CD14-positive monocyte (primary cell): ENCODE measurements at regions of chr6 and their contacts with region 1.

Region 1: GRCh38 chr6:75284632-75285286 is at the start of gene TMEM30A:
- DNase-seq: peak; percentile 99 to 100 (median 99)
- H3K4me3 ChIP-seq: peak within 1 kb of the TSS; percentile 91 to 100 (median 99)
- H3K4me3 Mint-ChIP-seq: no peak within 1 kb of the TSS
- H3K27ac ChIP-seq: peak within 1 kb of the TSS; percentile 93 to 98
- H3K27ac Mint-ChIP-seq: no peak within 1 kb of the TSS
- H3K4me1 ChIP-seq: peaks cover 18 to 54% of the 10 kb centered on the region in 2 donors
- H3K4me1 Mint-ChIP-seq: peaks cover 47% of the 10 kb centered on the region
- H3K27me3 ChIP-seq: no peaks in the 10 kb centered on the region
- H3K27me3 Mint-ChIP-seq: no peaks in the 10 kb centered on the region
- CTCF ChIP-seq: no peak
- polyA plus RNA-seq, gene TMEM30A: 12.2 to 101 (median 70.6) TPM

Region 2: GRCh38 chr6:75230484-75231325 is 54.1 kb before region 1 on chr6:
- intact Hi-C with region 1: no loop called
- DNase-seq: peak in 1 of 3 donors; percentile 7
- H3K4me3 ChIP-seq: no peak overlapping the region
- H3K4me3 Mint-ChIP-seq: no peak overlapping the region
- H3K27ac ChIP-seq: no peak overlapping the region
- H3K27ac Mint-ChIP-seq: no peak overlapping the region
- H3K4me1 ChIP-seq: no peaks in the 10 kb centered on the region
- H3K4me1 Mint-ChIP-seq: peaks cover 4% of the 10 kb centered on the region
- H3K27me3 ChIP-seq: no peaks in the 10 kb centered on the region
- H3K27me3 Mint-ChIP-seq: peaks cover 0 to 3% (median 2%) of the 10 kb centered on the region in 3 donors
- CTCF ChIP-seq: peak; percentile 62

Region 3: DNA sequence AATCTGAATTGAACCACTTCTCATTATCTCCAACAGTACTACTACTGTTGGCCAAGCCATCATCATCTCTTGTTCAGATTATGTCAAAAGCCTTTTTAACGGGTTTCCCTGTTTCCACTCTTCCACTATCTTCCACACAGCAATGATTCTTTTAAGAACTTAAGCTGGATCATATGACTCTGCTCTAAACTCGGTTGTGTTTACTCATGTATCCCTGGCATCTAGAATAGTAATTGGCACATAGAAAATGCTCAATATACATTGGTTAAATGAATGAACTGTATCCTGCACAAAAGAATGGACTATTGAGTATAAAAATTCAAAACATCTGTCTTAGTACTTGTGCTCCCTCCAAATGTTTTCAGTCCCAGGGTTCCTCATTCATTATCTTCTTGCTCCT is 38.4 kb before region 1 on chr6:
- intact Hi-C with region 1: loop called in 1 of 2 experiments (anchors 5 kb)
- DNase-seq: no peak
- H3K4me3 ChIP-seq: no peak overlapping the region
- H3K4me3 Mint-ChIP-seq: peak overlapping the region in 1 of 2 donors; percentile 18
- H3K27ac ChIP-seq: no peak overlapping the region
- H3K27ac Mint-ChIP-seq: no peak overlapping the region
- H3K4me1 ChIP-seq: peaks cover 7% of the 10 kb centered on the region in 2 donors
- H3K4me1 Mint-ChIP-seq: peaks cover 12% of the 10 kb centered on the region
- H3K27me3 ChIP-seq: peaks cover 8 to 22% of the 10 kb centered on the region in 2 donors
- H3K27me3 Mint-ChIP-seq: peaks cover 8 to 32% (median 23%) of the 10 kb centered on the region in 3 donors
- CTCF ChIP-seq: no peak

Region 4: DNA sequence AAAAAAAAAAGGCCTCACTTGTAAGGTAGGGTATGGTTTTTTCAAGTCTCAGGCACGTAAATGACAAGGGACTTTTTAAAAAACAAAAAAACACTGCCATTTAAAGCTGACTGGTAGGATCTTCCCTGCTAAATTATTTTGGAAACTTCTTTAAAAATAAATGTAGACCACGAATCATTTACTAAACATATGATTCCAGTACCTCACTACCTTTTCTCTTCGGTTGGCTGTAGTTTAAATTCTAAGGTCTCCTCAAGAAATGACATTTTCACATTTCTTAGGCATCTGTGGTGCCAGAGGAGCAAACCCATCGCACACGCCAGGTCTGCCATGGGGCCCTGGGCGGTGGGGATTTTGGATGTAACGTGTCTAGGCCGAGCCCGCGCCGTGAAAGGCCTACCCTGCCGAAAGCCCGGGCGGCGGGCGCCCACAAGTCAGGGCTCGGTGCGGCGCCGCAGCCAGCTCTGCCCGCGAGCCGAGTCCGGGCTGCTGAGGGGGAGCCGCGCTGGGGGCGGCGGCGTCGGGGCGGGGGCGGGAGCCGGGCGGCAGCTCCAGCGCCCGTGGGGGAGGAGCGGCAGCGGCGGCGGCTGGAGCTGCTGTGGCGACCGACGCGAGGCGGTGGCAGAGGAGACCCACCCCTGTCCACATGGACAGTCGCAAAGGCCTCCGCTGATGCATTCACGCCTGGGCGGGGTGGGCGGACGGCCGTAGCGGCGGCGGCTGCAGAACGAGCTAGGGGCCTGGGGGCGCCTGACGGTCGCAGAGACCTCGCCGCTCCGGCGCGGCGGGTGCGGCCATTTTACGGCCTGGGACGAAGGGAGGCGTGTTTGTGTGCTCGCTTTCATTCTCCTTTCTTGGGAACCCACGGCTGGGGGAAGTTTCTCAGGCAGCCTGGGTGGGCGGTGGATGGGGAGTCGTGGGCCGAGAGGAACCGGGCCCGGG is 316.8 kb after region 1 on chr6 and contains the start of gene SENP6:
- intact Hi-C with region 1: loop called (anchors 5 to 10 kb)
- DNase-seq: peak; percentile 60 to 70 (median 66)
- H3K4me3 ChIP-seq: peak within 1 kb of the TSS; percentile 56 to 97 (median 89)
- H3K4me3 Mint-ChIP-seq: peak within 1 kb of the TSS; percentile 97 to 98
- H3K27ac ChIP-seq: peak within 1 kb of the TSS; percentile 83 to 94
- H3K27ac Mint-ChIP-seq: peak within 1 kb of the TSS; percentile 94 to 99 (median 96)
- H3K4me1 ChIP-seq: peaks cover 26 to 43% of the 10 kb centered on the region in 2 donors
- H3K4me1 Mint-ChIP-seq: peaks cover 43% of the 10 kb centered on the region
- H3K27me3 ChIP-seq: no peaks in the 10 kb centered on the region
- H3K27me3 Mint-ChIP-seq: peaks cover 0 to 2% (median 0%) of the 10 kb centered on the region in 3 donors
- CTCF ChIP-seq: no peak
- polyA plus RNA-seq, gene SENP6: 22.3 to 43.9 (median 31.9) TPM